Activated CD4-positive, alpha-beta memory T cell treated with anti-CD3 and anti-CD28 coated beads for 36 hours (primary cell): ENCODE measurements at regions of chr12 and their contacts with region 1.

Region 1: DNA sequence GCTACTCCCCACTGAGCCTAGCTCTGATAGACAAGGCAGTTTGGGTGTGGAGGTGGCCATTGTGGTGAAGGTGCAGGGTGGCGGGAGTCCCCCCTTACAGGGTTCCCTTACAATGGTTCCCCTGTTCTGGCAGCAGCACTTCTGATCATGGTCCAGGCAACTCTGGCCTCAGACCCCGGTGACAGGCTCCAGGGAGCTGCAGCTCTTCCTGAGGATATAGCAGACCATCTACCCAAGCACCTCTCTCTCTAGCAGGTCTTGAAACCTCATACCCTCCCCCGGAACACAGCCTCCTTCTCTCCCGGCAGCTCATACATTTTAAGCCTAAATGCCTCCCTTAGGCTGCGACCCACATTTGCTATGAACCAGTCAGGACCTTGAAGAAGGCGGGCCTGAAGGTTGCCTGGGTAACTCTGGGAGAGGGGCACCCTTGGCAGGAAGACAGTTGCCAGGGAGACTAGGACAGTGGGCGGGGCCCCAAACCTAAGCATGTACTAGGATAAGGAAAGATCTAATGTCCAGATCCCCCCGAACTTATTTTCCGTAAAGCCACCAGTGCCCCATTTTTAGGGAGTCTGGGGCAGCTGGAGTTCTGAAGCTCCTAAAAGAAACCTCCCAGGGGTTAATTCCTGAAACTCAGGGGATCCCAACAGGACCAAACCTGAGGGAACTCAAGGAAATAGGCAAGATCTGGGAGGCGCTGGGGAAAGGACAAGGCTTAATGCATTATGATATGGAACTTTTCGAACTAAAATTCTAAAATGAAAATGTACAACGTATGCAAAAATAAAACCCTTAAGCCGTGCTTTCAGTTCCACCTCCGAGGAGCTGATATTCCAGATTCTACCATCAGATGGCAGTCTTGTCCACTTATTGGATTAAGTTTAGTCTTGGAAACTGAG is 4.5 kb upstream of the GDF11 start:
- DNase-seq: peak; percentile 87
- H3K4me3 Mint-ChIP-seq: peak overlapping the region; percentile 77
- H3K27ac Mint-ChIP-seq: peak overlapping the region; percentile 85
- H3K4me1 Mint-ChIP-seq: peaks cover 21% of the 10 kb centered on the region
- H3K27me3 Mint-ChIP-seq: no peaks in the 10 kb centered on the region

Region 2: DNA sequence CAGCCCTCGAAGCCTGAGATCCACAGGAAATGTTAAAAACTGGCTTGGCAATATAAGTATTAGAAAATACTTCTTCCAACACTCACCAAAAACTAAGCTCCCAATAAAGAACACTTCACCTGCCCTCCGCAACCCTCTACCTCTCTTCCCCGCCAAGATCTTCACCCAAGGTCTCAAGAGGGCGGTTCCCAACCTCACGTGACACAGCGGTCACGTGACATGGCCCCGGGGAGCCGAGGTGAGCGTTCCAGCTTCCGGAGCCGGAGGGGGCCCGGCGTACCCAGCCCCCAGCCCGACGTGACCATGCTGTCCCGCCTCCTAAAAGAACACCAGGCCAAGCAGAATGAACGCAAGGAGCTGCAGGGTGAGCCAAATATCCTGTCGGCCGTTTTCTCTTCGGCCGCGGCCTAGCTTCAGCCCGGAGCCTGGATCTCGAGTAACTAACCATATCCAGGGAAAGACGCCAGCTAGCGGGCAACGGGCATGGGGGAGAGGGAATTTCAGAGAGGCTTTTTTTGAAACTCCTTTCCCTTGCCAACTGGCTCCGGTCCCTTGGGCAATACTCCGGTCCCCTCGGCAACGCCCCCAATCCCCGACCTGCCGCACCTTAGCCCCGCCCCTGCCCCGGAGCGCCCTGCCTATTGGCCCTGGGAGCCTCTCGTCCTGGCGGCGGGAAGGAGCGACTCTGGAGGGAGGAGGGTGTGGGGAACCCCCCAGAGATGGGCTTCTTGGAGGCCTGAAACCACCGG is 22.4 kb before region 1 on chr12 and contains the start of gene BLOC1S1:
- CTCF ChIA-PET with region 1: interaction called, 36 read pairs
- POLR2A ChIA-PET with region 1: interaction called, 4 read pairs
- intact Hi-C with region 1: loop called (anchors 1 kb)
- DNase-seq: peak; percentile 96
- H3K4me3 Mint-ChIP-seq: peak within 1 kb of the TSS; percentile 90
- H3K27ac Mint-ChIP-seq: peak within 1 kb of the TSS; percentile 89
- H3K4me1 Mint-ChIP-seq: peaks cover 30% of the 10 kb centered on the region
- H3K27me3 Mint-ChIP-seq: peaks cover 2% of the 10 kb centered on the region
- total RNA-seq, gene BLOC1S1: 153 to 162 TPM

Region 3: GRCh38 chr12:55817346-55818139 is 79.2 kb after region 1 on chr12 and contains the starts of genes ORMDL2 and SARNP:
- CTCF ChIA-PET with region 1: interaction called, 46 read pairs
- POLR2A ChIA-PET with region 1: interaction called, 12 read pairs
- intact Hi-C with region 1: loop called (anchors 2 kb)
- DNase-seq: peak; percentile 99
- H3K4me3 Mint-ChIP-seq: no peak within 1 kb of the TSS
- H3K27ac Mint-ChIP-seq: no peak within 1 kb of the TSS
- H3K4me1 Mint-ChIP-seq: peaks cover 49% of the 10 kb centered on the region
- H3K27me3 Mint-ChIP-seq: no peaks in the 10 kb centered on the region
- total RNA-seq, gene ORMDL2: 37.9 to 41.2 TPM
- total RNA-seq, gene SARNP: 104 to 110 TPM

Region 4: GRCh38 chr12:55926738-55927587 is 188.6 kb after region 1 on chr12:
- CTCF ChIA-PET with region 1: interaction called, 130 read pairs
- POLR2A ChIA-PET with region 1: interaction called, 6 read pairs
- intact Hi-C with region 1: loop called (anchors 1 kb)
- DNase-seq: peak; percentile 96
- H3K4me3 Mint-ChIP-seq: peak overlapping the region; percentile 96
- H3K27ac Mint-ChIP-seq: peak overlapping the region; percentile 98
- H3K4me1 Mint-ChIP-seq: peaks cover 43% of the 10 kb centered on the region
- H3K27me3 Mint-ChIP-seq: no peaks in the 10 kb centered on the region

Region 5: GRCh38 chr12:55996715-55997534 is 258.6 kb after region 1 on chr12 and contains the start of gene SUOX:
- CTCF ChIA-PET with region 1: interaction called, 21 read pairs
- POLR2A ChIA-PET with region 1: no interaction called
- intact Hi-C with region 1: no loop called
- DNase-seq: peak; percentile 61
- H3K4me3 Mint-ChIP-seq: peak within 1 kb of the TSS; percentile 60
- H3K27ac Mint-ChIP-seq: no peak within 1 kb of the TSS
- H3K4me1 Mint-ChIP-seq: peaks cover 19% of the 10 kb centered on the region
- H3K27me3 Mint-ChIP-seq: peaks cover 5% of the 10 kb centered on the region
- total RNA-seq, gene SUOX: 2.4 to 2.7 TPM

Region 6: GRCh38 chr12:56127888-56128669 is 389.7 kb after region 1 on chr12 and contains the start of gene ESYT1:
- CTCF ChIA-PET with region 1: interaction called, 4 read pairs
- POLR2A ChIA-PET with region 1: no interaction called
- intact Hi-C with region 1: loop called (anchors 2 kb)
- DNase-seq: peak; percentile 99
- H3K4me3 Mint-ChIP-seq: peak within 1 kb of the TSS; percentile 97
- H3K27ac Mint-ChIP-seq: peak within 1 kb of the TSS; percentile 93
- H3K4me1 Mint-ChIP-seq: peaks cover 60% of the 10 kb centered on the region
- H3K27me3 Mint-ChIP-seq: no peaks in the 10 kb centered on the region
- total RNA-seq, gene ESYT1: 142 to 146 TPM